ENCODE measurements at regions of chr7 and their contacts with region 1.

Region 1: DNA sequence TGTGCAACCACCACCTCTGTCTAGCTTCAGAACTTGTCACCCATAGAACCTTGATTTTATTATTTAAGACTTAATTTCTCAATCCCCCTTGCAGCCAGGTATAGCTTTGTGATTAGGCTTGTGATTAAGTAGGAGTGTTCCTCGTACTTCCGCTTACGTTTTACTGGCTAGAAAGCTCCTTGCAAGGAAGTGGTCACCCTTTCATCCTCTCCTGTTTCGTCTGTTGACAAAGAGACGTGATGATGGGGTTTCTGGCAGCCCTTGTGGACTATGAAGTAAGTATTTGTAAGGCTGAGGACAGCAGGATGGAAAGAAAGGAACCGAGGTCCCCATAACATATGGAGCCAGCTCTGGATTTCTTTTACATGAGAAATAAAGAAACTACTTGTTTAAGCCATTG is 86.5 kb upstream of the KDM7A start:
- DNase-seq: no peak
- ATAC-seq: peak; percentile 96
- H3K4me3 Mint-ChIP-seq: peak overlapping the region; percentile 50
- H3K27ac Mint-ChIP-seq: peak overlapping the region; percentile 94
- H3K4me1 Mint-ChIP-seq: peaks cover 41% of the 10 kb centered on the region
- H3K27me3 Mint-ChIP-seq: no peaks in the 10 kb centered on the region

Region 2: DNA sequence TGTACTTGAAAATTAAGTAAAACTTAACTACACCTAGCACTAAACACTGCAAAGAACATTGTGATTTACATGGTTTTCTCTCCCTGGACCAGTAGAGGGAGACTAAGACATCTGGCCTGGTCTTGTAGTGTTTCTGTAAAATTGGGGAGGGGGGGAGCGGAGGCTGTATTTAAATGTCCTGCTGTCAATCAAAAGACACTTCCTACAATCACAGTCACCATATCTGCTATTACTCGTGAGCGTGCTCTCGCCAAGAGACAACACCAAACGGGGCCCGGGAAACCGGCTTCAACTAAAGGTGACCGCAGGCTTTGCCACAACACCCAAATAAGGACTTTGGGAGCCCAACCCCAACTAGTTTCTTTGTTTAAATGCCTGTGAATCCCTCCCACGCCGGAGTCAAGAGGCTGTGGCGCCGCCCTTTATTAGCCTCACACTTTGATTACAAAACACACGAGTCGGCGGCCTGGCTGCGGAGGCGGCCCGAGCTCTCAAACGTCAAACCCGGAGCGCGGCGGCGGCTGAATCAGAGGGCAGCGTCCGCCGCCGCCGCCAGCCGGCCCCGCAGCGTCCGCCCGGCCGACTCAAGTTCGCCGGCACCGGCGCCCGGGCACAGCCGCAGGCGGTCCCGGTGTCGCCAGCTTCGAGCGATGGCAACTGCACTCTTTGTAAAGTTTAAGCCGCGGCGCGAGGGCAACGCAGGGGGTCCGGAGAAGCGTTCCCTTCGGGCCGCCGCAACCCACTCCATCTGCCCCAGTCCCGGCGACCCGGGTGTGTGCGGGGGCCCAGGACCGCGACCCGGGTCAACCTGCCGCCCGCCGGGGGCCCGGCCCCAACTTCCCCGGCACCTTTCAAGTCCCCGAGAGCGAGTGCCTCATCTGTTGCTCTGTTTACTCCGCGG is 87.8 kb before region 1 on chr7:
- POLR2A ChIA-PET with region 1: interaction called, 17 read pairs
- DNase-seq: peak; percentile 78
- ATAC-seq: peak; percentile 48
- H3K4me3 Mint-ChIP-seq: peak overlapping the region; percentile 81
- H3K27ac Mint-ChIP-seq: peak overlapping the region; percentile 87
- H3K4me1 Mint-ChIP-seq: peaks cover 16% of the 10 kb centered on the region
- H3K27me3 Mint-ChIP-seq: peaks cover 17% of the 10 kb centered on the region

Region 3: DNA sequence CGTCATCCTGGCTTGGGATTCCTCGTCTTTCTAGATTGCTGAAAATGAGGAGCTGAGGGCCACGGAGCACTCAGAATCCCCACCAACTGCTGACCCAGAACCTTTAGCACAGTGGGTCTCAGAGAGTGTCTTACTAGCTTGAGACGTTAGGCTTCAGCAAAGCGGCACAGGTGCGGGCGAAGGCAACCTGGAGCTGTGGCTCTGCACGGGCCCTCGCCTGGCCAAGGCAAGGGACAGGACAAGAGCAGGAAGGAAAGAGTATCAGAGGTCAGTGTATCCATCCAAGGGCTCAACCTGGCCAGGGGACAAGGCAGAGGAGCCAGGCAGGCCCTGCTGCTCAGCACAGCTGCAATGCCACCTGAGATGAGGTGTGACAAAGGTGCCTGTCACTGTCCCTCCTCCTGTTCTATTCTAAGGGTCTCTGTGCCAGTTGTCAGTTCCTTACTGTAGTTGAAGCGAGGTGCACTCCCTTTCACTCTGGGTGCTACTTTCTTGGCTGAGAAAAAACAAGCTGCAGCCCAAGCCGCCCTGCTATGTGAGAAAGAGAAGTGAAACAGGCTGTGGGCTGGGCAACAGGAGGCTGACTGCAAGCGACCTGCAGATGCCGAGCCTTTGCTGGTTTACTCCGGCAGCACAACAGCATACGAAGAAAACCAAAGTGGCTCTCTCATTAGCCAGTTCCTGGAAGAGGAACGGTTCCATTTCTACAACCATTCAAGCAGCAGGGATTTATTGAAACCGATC is 53.2 kb before region 1 on chr7:
- POLR2A ChIA-PET with region 1: no interaction called
- DNase-seq: peak; percentile 44
- ATAC-seq: peak; percentile 85
- H3K4me3 Mint-ChIP-seq: peak overlapping the region; percentile 51
- H3K27ac Mint-ChIP-seq: peak overlapping the region; percentile 79
- H3K4me1 Mint-ChIP-seq: peaks cover 29% of the 10 kb centered on the region
- H3K27me3 Mint-ChIP-seq: peaks cover 4% of the 10 kb centered on the region

Region 4: GRCh38 chr7:140249036-140249806 is 14.1 kb before region 1 on chr7:
- POLR2A ChIA-PET with region 1: interaction called, 16 read pairs
- DNase-seq: no peak
- ATAC-seq: no peak
- H3K4me3 Mint-ChIP-seq: no peak overlapping the region
- H3K27ac Mint-ChIP-seq: no peak overlapping the region
- H3K4me1 Mint-ChIP-seq: peaks cover 18% of the 10 kb centered on the region
- H3K27me3 Mint-ChIP-seq: peaks cover 4% of the 10 kb centered on the region

Region 5: DNA sequence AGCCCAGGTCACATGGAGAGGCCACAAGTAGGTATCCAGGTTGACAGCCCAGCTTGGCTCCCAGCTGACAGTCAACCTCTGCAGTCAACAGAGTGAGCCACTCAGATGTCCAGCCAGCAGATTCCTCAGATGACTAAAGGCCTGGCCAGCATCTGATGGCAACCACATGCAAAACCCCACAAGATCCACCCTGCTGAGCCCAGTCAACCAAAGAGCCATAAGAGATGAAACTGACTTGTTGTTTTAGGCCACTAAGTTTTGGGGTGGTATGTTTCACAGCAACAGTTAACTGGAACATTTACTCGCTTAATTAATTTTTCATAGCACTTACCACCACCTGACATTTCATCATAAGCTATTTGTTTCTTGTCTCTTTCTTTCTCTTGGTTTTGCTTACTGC is 20.8 kb after region 1 on chr7:
- POLR2A ChIA-PET with region 1: no interaction called
- DNase-seq: no peak
- ATAC-seq: no peak
- H3K4me3 Mint-ChIP-seq: no peak overlapping the region
- H3K27ac Mint-ChIP-seq: no peak overlapping the region
- H3K4me1 Mint-ChIP-seq: no peaks in the 10 kb centered on the region
- H3K27me3 Mint-ChIP-seq: no peaks in the 10 kb centered on the region

Region 6: GRCh38 chr7:140326116-140326928 is 63.0 kb after region 1 on chr7:
- POLR2A ChIA-PET with region 1: no interaction called
- DNase-seq: peak; percentile 34
- ATAC-seq: peak; percentile 87
- H3K4me3 Mint-ChIP-seq: no peak overlapping the region
- H3K27ac Mint-ChIP-seq: peak overlapping the region; percentile 2
- H3K4me1 Mint-ChIP-seq: no peaks in the 10 kb centered on the region
- H3K27me3 Mint-ChIP-seq: no peaks in the 10 kb centered on the region